ENCODE measurements at regions of chr3 and their contacts with region 1.

Region 1: DNA sequence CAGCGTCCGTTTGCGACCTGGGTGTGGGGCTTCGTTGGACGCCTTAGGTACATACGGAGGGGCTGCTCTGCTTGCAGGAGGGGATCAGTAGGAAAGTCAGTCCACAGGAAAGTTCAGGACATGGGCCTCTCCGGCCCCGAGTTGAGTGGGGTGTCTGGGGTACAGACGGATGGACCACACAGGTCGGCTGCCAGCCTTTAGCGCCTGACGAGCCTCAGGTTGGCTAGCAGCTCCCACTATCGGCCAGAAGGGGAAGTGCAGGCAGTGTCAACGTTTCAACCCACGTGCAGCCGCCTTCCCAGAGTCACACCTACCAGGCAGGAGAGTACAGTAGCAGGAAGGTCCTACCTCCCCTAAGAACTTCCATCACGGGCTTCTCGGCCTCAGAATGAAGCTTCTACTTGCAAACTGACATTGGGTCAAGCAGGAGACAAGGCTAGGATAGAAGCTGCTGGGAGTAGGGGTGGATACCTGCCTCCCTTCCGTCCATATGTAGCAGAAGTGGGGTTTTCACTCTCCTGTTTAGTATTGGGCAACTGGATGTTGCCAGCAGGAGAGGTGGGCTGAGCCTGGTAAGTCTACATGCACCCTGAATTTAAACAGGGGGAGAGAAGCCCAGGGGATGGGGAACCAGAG is 1.8 kb upstream of the SCN5A start:
- DNase-seq: peak; percentile 83
- ATAC-seq: peak; percentile 43
- H3K4me3 Mint-ChIP-seq: no peak overlapping the region
- H3K27ac Mint-ChIP-seq: no peak overlapping the region
- H3K4me1 Mint-ChIP-seq: peaks cover 10% of the 10 kb centered on the region
- H3K27me3 Mint-ChIP-seq: peaks cover 15% of the 10 kb centered on the region
- CTCF ChIP-seq: peak; percentile 98

Region 2: DNA sequence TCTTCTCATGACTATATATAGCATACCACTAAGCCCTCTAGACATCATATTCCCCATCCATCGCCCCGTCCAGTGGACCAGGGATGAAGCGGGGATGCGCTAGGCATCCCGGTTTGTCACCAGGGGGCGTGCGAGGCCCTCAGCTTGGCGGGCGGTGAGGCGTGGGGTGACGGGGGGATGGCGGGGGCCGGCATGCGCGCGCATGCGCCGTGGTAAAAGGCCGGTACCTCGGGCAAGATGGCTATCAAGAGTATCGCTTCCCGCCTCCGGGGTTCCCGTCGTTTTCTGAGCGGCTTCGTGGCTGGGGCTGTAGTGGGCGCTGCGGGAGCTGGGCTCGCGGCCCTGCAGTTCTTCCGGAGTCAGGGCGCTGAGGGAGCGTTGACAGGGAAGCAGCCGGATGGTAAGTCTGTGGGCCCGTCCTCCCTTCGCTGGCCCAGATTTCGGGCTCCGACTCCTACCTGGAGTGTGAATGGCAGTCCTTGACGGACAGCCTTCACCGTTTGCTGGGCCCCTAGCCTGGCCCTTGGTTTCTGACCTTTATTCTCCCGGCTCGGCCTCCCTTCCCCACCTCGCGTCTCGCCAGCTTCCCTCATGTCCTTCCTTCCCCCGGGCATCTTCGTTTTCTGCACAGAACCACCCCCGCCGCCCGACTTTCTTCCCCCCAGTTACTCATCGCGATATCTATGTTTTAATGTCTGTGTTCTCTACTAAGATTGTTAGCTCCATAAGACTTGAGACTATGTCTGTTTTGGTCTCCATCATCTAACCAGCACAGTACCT is 155.0 kb before region 1 on chr3 and contains the start of gene EXOG:
- CTCF ChIA-PET with region 1: interaction called, 35 read pairs
- POLR2A ChIA-PET with region 1: no interaction called
- DNase-seq: peak; percentile 96
- ATAC-seq: peak; percentile 93
- H3K4me3 Mint-ChIP-seq: peak within 1 kb of the TSS; percentile 93
- H3K27ac Mint-ChIP-seq: peak within 1 kb of the TSS; percentile 68
- H3K4me1 Mint-ChIP-seq: peaks cover 5% of the 10 kb centered on the region
- H3K27me3 Mint-ChIP-seq: no peaks in the 10 kb centered on the region
- CTCF ChIP-seq: peak; percentile 71
- total RNA-seq, gene EXOG: 12.2 to 13.7 TPM (median 12.9 TPM) in 3 replicates

Region 3: DNA sequence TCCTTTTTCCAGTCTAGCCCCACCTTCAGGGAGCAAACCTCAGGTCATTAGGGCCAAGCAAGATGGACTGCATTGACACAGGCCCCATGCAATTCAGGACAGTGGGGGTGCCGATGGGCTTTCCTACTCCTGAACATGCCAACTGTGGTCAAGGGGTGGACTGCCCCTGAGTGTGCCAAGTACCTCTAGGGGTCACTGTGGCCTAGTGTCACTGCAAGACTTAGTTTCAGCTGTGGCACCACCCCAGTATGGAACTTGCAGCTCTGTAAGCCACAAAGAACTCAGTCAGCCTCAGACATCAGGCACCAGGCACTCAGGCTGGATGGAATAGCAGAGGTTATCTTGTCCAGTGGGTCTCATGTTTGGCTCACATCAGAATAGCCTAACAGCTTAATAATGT is 122.8 kb before region 1 on chr3:
- CTCF ChIA-PET with region 1: interaction called, 17 read pairs
- POLR2A ChIA-PET with region 1: no interaction called
- DNase-seq: peak; percentile 53
- ATAC-seq: peak; percentile 88
- H3K4me3 Mint-ChIP-seq: no peak overlapping the region
- H3K27ac Mint-ChIP-seq: peak overlapping the region; percentile 29; the same call in 1 of the 2 replicates
- H3K4me1 Mint-ChIP-seq: peaks cover 21% of the 10 kb centered on the region
- H3K27me3 Mint-ChIP-seq: no peaks in the 10 kb centered on the region
- CTCF ChIP-seq: no peak

Region 4: DNA sequence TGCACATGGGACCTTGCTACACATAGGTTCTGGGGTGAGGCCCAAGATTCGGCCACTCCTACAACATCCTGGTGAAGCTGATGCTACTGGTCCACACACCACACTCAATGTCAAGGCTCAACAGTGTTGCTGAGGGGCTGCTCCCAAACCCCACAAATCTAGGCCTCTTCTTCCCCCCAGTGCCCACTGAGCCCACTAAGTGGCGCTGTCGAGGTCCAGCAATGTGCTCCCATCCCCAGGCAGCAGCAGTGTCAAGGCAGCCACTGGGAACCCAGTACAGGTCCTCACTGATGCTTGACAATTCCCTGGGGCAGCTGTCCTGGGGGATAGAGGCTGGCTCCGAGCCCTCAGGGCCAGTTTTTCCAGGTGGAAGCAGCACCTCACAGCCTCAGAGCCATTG is 23.3 kb before region 1 on chr3:
- CTCF ChIA-PET with region 1: interaction called, 38 read pairs
- POLR2A ChIA-PET with region 1: no interaction called
- DNase-seq: peak; percentile 87
- ATAC-seq: peak; percentile 86
- H3K4me3 Mint-ChIP-seq: no peak overlapping the region
- H3K27ac Mint-ChIP-seq: no peak overlapping the region
- H3K4me1 Mint-ChIP-seq: peaks cover 14% of the 10 kb centered on the region
- H3K27me3 Mint-ChIP-seq: no peaks in the 10 kb centered on the region; the same call in 1 of the 2 replicates
- CTCF ChIP-seq: peak; percentile 51

Region 5: GRCh38 chr3:38634111-38634510 is 17.2 kb before region 1 on chr3:
- CTCF ChIA-PET with region 1: interaction called, 38 read pairs
- POLR2A ChIA-PET with region 1: no interaction called
- DNase-seq: no peak
- ATAC-seq: no peak
- H3K4me3 Mint-ChIP-seq: no peak overlapping the region
- H3K27ac Mint-ChIP-seq: no peak overlapping the region
- H3K4me1 Mint-ChIP-seq: peaks cover 31% of the 10 kb centered on the region
- H3K27me3 Mint-ChIP-seq: no peaks in the 10 kb centered on the region; the same call in 1 of the 2 replicates
- CTCF ChIP-seq: no peak

Region 6: DNA sequence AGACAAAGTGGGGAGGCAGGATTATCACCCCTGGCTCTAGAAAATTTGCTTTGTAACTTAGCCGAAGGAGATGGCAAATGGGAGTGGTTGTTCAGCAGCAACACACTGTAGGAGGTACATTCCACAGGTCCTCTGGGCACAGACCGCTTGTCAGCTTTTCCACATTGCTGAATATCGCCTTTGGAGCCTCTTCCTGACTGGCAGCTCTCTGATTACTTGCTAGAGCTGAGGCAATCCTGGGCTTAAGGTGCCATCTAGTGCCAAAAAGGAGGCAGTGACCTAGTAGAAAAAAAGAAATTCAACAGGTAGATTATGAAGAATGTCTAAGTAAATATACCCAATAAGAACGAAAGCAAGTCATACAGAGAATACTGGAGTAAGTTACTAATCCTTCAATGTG is 11.3 kb after region 1 on chr3:
- CTCF ChIA-PET with region 1: interaction called, 13 read pairs
- POLR2A ChIA-PET with region 1: no interaction called
- DNase-seq: peak; percentile 42
- ATAC-seq: peak; percentile 96
- H3K4me3 Mint-ChIP-seq: no peak overlapping the region
- H3K27ac Mint-ChIP-seq: no peak overlapping the region
- H3K4me1 Mint-ChIP-seq: peaks cover 8% of the 10 kb centered on the region
- H3K27me3 Mint-ChIP-seq: peaks cover 7% of the 10 kb centered on the region
- CTCF ChIP-seq: peak; percentile 61